ENCODE measurements at regions of chr6 and their contacts with region 1.

Region 1: DNA sequence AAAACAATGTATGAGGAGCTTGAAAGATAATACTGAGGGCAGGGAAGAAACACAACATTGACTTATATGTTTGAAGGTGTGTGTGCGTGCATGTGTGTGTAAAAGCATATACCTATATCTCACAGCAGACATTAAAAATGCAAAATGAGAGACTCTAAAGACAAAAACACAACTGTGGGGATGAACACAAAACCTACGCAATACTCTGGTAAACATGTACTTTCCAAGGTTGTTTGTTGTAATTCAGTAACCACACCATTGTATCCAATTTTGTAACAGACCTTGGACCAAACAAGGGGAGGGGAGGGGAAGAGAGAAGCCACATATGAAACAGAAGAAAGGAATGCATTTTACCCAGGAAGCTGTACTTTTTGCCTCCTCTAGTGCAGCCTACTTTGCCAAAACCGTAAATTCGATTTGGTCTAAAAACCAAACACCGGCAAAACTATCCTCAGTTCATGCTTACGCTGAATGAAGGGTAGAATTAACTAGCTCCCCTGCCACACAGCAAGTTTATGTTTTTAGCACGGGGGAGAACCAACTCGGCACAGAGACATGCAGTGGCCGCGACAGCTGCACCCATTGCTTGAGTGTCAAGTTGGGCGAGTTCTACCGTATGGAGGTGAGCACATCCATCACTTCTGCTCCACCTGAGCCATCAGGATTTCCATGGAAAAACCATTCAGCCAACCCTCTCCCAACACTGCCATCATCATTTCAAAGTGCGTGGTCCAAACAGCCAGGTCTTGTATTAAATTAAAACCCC is 50.0 kb downstream of the CNKSR3 start:
- DNase-seq: no peak
- ATAC-seq: no peak
- H3K4me3 ChIP-seq: no peak overlapping the region
- H3K4me3 Mint-ChIP-seq: no peak overlapping the region
- H3K27ac ChIP-seq: no peak overlapping the region
- H3K27ac Mint-ChIP-seq: no peak overlapping the region
- H3K4me1 ChIP-seq: no peaks in the 10 kb centered on the region
- H3K4me1 Mint-ChIP-seq: peaks cover 4 to 6% (median 6%) of the 10 kb centered on the region in 3 donors
- H3K27me3 ChIP-seq: peaks cover 0 to 6% of the 10 kb centered on the region in 2 experiments
- H3K27me3 Mint-ChIP-seq: peaks cover 0 to 5% of the 10 kb centered on the region in 2 donors

Region 2: GRCh38 chr6:154441995-154442310 is 18.5 kb before region 1 on chr6:
- CTCF ChIA-PET with region 1: interaction called in 1 of 2 experiments, 3 read pairs
- POLR2A ChIA-PET with region 1: interaction called in 1 of 2 experiments, 10 read pairs
- DNase-seq: no peak
- ATAC-seq: no peak
- H3K4me3 ChIP-seq: no peak overlapping the region
- H3K4me3 Mint-ChIP-seq: no peak overlapping the region
- H3K27ac ChIP-seq: no peak overlapping the region
- H3K27ac Mint-ChIP-seq: no peak overlapping the region
- H3K4me1 ChIP-seq: no peaks in the 10 kb centered on the region
- H3K4me1 Mint-ChIP-seq: no peaks in the 10 kb centered on the region
- H3K27me3 ChIP-seq: peaks cover 0 to 8% of the 10 kb centered on the region in 2 experiments
- H3K27me3 Mint-ChIP-seq: peaks cover under 1 to 15% of the 10 kb centered on the region in 2 donors